T-cell (primary cell): ENCODE measurements at regions of chr16 and their contacts with region 1.

Region 1: DNA sequence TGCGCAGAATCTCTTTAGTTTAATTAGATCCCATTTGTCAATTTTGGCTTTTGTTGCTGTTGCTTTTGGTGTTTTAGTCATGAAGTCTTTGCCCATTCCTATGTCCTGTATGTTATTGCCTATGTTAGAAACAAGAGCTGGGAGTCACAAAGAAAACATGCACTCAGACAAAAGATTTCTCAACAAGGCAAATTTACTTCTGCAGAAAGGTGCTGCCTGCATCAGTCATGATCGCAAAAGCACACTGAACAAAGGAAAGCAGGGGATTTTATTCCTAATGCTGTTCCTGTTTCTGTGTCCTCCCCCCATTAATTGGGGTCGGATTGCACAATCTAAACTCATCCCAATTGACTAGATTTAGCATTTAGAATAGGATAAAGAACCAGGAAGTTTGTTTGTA is 55.9 kb downstream of the ATF7IP2 start:
- DNase-seq: no peak
- ATAC-seq: no peak
- H3K4me3 ChIP-seq: no peak overlapping the region
- H3K4me3 Mint-ChIP-seq: no peak overlapping the region
- H3K27ac ChIP-seq: no peak overlapping the region
- H3K27ac Mint-ChIP-seq: no peak overlapping the region
- H3K4me1 ChIP-seq: no peaks in the 10 kb centered on the region
- H3K4me1 Mint-ChIP-seq: no peaks in the 10 kb centered on the region
- H3K27me3 ChIP-seq: no peaks in the 10 kb centered on the region
- H3K27me3 Mint-ChIP-seq: no peaks in the 10 kb centered on the region

Region 2: DNA sequence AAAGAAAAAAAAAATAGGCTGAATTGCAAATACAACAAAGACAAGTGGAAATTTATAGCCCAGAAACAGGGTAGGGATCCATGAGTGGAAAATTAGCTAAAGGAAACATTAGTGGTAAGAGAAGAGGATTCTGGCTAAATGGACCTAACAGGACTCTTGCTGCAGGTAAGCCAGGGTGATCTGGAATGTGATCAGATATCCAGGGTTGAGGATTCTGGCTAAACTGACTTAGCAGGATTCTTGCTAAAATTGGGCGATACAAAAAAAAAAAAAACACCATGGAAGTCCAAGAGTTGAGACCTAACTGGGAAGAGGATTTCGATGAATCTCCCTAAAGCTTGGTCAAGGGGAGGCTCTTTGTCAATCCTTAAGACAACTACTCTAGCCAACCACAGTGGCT is 117.5 kb before region 1 on chr16:
- CTCF ChIA-PET with region 1: no interaction called
- POLR2A ChIA-PET with region 1: interaction called in 1 of 2 experiments, 11 read pairs
- DNase-seq: no peak
- ATAC-seq: no peak
- H3K4me3 ChIP-seq: no peak overlapping the region
- H3K4me3 Mint-ChIP-seq: no peak overlapping the region
- H3K27ac ChIP-seq: no peak overlapping the region
- H3K27ac Mint-ChIP-seq: no peak overlapping the region
- H3K4me1 ChIP-seq: peaks cover 0 to 16% of the 10 kb centered on the region in 2 experiments
- H3K4me1 Mint-ChIP-seq: peaks cover 11 to 18% (median 14%) of the 10 kb centered on the region in 3 donors
- H3K27me3 ChIP-seq: no peaks in the 10 kb centered on the region
- H3K27me3 Mint-ChIP-seq: no peaks in the 10 kb centered on the region

Region 3: GRCh38 chr16:10521681-10522274 is 80.1 kb after region 1 on chr16:
- CTCF ChIA-PET with region 1: no interaction called
- POLR2A ChIA-PET with region 1: no interaction called
- DNase-seq: peak in 23 of 35 experiments; percentile 2 to 71 (median 17)
- ATAC-seq: peak in 1 of 4 experiments; percentile 43
- H3K4me3 ChIP-seq: no peak overlapping the region
- H3K4me3 Mint-ChIP-seq: no peak overlapping the region
- H3K27ac ChIP-seq: no peak overlapping the region
- H3K27ac Mint-ChIP-seq: no peak overlapping the region
- H3K4me1 ChIP-seq: no peaks in the 10 kb centered on the region
- H3K4me1 Mint-ChIP-seq: peaks cover 0 to 1% (median 0%) of the 10 kb centered on the region in 3 donors
- H3K27me3 ChIP-seq: peaks cover 0 to 17% of the 10 kb centered on the region in 2 experiments
- H3K27me3 Mint-ChIP-seq: peaks cover 4 to 9% of the 10 kb centered on the region in 2 donors